AG04450 (cell line): ENCODE measurements at regions of chr6 and their contacts with region 1.

Region 1: DNA sequence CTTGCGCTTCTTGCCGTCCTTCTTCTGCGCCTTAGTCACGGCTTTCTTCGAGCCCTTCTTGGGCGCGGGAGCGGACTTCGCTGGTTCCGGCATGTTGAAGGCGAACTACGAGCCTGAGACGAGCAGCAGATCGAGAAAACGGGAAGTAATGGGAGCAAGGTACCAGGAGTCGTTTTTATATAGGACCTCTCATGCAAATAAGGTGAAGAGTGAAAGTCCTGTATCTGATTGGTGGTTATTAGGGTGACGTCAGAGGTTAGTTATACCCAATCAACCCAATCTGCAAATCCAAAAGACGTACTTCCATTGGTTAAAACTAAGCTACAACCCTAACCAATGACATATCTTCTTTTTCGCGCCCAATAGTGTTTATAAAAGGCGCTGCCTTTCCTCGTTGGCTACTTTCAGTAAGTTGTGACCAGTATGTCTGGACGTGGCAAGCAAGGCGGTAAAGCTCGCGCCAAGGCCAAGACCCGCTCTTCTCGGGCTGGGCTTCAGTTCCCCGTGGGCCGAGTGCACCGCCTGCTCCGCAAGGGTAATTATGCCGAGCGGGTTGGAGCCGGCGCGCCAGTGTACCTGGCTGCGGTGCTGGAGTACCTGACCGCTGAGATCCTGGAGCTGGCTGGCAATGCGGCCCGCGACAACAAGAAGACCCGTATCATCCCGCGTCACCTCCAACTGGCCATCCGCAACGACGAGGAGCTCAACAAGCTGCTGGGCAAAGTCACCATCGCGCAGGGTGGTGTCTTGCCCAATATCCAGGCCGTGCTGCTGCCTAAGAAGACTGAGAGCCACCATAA is 100.6 kb upstream of the PRSS16 start:
- DNase-seq: peak; percentile 99
- H3K4me3 ChIP-seq: peak overlapping the region; percentile 73
- H3K27ac ChIP-seq: peak overlapping the region; percentile 98
- H3K27me3 ChIP-seq: no peaks in the 10 kb centered on the region
- CTCF ChIP-seq: no peak

Region 2: GRCh38 chr6:26031595-26032339 is 1115.1 kb before region 1 on chr6:
- CTCF ChIA-PET with region 1: no interaction called
- POLR2A ChIA-PET with region 1: interaction called, 14 read pairs
- DNase-seq: peak; percentile 87
- H3K4me3 ChIP-seq: peak overlapping the region; percentile 68
- H3K27ac ChIP-seq: peak overlapping the region; percentile 92
- H3K27me3 ChIP-seq: no peaks in the 10 kb centered on the region
- CTCF ChIP-seq: peak; percentile 33

Region 3: GRCh38 chr6:26156076-26156849 is 990.6 kb before region 1 on chr6:
- CTCF ChIA-PET with region 1: no interaction called
- POLR2A ChIA-PET with region 1: interaction called, 13 read pairs
- DNase-seq: peak; percentile 74
- H3K4me3 ChIP-seq: peak overlapping the region; percentile 83
- H3K27ac ChIP-seq: peak overlapping the region; percentile 97
- H3K27me3 ChIP-seq: no peaks in the 10 kb centered on the region
- CTCF ChIP-seq: peak; percentile 1; the same call in 1 of the 2 replicates

Region 4: GRCh38 chr6:27126815-27127537 is 19.9 kb before region 1 on chr6:
- CTCF ChIA-PET with region 1: interaction called, 13 read pairs
- POLR2A ChIA-PET with region 1: interaction called, 251 read pairs
- DNase-seq: peak; percentile 82
- H3K4me3 ChIP-seq: peak overlapping the region; percentile 53
- H3K27ac ChIP-seq: peak overlapping the region; percentile 47
- H3K27me3 ChIP-seq: no peaks in the 10 kb centered on the region
- CTCF ChIP-seq: peak; percentile 91

Region 5: GRCh38 chr6:27157459-27158315 is 10.8 kb after region 1 on chr6:
- CTCF ChIA-PET with region 1: interaction called, 6 read pairs
- POLR2A ChIA-PET with region 1: interaction called, 16 read pairs
- DNase-seq: no peak
- H3K4me3 ChIP-seq: peak overlapping the region; percentile 62
- H3K27ac ChIP-seq: no peak overlapping the region
- H3K27me3 ChIP-seq: no peaks in the 10 kb centered on the region
- CTCF ChIP-seq: peak; percentile 62

Region 6: DNA sequence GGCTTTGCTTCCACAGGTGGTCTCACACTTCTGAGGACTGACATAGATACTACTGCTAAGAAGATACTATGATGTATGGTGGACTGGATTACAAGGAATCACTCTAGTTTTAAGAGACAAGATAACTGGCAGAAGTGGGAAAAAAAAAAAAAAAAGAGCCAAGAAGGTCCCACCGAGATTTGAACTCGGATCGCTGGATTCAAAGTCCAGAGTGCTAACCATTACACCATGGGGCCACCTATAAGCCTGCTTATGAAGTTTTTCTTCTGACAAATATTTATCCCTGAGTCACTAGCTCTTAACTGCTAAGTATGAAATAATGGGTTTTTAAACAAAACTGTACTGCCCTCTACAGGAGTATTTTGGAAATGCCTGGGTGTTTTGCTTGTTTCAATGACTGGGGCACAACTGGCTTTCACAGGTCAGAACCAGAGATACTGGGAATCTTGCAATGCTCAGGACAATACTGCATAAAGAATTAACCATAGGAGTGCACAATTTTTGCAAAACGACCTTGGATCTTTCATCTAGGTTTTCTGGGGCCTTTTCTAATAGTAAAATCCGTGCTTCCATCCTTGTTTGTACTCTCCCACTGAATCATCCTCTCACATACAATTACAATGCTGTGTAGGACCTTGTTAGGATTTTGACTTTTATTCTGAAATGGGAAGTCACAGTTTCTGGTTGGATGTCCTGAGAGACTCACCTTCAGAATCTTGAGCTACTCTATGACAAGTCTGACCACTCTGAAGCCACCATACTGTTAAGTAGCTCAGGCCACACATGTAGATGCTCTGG is 649.0 kb after region 1 on chr6:
- CTCF ChIA-PET with region 1: interaction called, 12 read pairs
- POLR2A ChIA-PET with region 1: no interaction called
- DNase-seq: peak; percentile 84
- H3K4me3 ChIP-seq: no peak overlapping the region
- H3K27ac ChIP-seq: no peak overlapping the region
- H3K27me3 ChIP-seq: no peaks in the 10 kb centered on the region
- CTCF ChIP-seq: peak; percentile 83

Region 7: GRCh38 chr6:27864906-27865849 is 718.3 kb after region 1 on chr6:
- CTCF ChIA-PET with region 1: interaction called, 3 read pairs
- POLR2A ChIA-PET with region 1: interaction called, 11 read pairs
- DNase-seq: peak; percentile 94
- H3K4me3 ChIP-seq: peak overlapping the region; percentile 75
- H3K27ac ChIP-seq: peak overlapping the region; percentile 96
- H3K27me3 ChIP-seq: no peaks in the 10 kb centered on the region
- CTCF ChIP-seq: no peak